Right ventricle myocardium inferior (tissue), 1 donor: ENCODE measurements at regions of chr18 and their contacts with region 1.

Region 1: DNA sequence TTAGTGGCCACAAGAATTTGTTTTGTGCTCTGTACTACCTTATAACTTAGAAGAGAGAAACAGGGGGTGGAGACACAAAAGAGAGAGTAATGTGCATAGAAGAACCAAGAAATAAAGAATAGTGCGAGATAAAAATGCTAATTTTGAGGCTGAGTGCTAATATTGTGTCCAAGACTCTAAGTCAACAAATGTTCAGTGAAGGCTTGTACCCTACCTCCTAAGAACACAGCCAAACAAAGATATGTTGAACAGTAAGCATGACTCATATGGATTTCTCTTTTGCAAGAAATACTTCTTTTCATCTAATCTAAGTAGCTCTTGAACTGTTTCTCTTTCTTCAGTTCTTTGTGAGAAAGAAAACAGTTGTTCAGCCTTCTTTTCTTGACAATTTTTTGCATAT is 45.2 kb downstream of the GAREM1 start:
- DNase-seq: no peak
- ATAC-seq: peak; percentile 29

Region 2: DNA sequence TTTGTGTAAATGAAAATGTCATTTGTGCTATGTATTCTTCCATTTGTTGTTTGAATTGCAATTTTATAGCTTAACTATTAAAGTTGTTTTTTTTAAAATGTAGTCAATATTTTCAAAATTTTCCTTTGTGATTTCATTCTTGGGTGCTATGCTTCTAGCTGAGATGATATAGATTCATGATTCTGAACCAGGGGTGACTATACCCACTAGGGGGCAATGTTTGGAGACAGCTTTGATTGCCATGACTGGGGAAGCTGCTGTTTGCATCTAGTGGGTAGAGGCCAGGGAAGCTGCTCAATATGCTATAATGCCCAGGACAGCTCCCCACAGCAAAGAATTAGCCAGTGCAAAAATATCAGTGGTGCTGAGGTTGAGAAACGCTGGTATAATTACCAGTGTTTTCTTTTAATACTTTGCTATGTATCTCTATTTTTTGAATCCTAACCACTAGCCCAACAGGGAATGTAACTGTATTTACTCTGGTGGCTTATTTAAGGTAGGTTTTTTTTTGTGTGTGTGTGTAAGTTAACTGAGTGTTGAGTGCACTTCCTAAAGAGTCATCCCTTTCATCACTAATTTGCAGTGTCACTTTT is 135.9 kb before region 1 on chr18:
- intact Hi-C with region 1: loop called (anchors 5 kb)
- DNase-seq: no peak
- ATAC-seq: no peak

Region 3: GRCh38 chr18:32389858-32390257 is 35.6 kb before region 1 on chr18:
- intact Hi-C with region 1: loop called (anchors 5 kb)
- DNase-seq: no peak
- ATAC-seq: peak; percentile 83

Region 4: DNA sequence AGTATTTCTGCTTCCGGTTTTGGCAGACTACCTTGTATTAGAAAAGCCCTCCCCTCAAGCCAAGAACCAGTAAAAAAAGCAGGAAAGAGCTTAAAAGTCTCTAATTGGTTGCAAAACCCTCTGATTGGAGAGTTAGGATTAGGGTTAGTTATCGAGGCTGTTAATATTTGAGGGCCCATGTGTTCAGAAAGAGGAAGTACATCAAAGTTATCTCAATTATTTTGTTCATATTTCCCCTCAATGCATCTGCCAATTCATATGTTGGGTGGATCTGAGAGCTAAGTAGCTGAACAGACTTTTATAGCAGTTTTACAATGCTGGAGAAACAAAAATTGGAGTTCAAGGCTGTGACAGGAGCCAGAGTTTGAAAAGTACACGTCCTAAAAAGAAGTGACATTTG is 390.4 kb after region 1 on chr18:
- intact Hi-C with region 1: no loop called
- DNase-seq: no peak
- ATAC-seq: no peak